CD4-positive, alpha-beta memory T cell (primary cell): ENCODE measurements at regions of chr17 and their contacts with region 1.

Region 1: GRCh38 chr17:1043601-1044251 is 46.8 kb downstream of the TIMM22 start:
- DNase-seq: no peak
- H3K4me3 ChIP-seq: no peak overlapping the region
- H3K4me3 Mint-ChIP-seq: no peak overlapping the region
- H3K27ac ChIP-seq: no peak overlapping the region
- H3K27ac Mint-ChIP-seq: no peak overlapping the region
- H3K4me1 ChIP-seq: no peaks in the 10 kb centered on the region
- H3K4me1 Mint-ChIP-seq: peaks cover 0 to 15% (median 5%) of the 10 kb centered on the region in 4 donors
- H3K27me3 ChIP-seq: no peaks in the 10 kb centered on the region
- H3K27me3 Mint-ChIP-seq: no peaks in the 10 kb centered on the region

Region 2: GRCh38 chr17:1055751-1056645 is 12.3 kb after region 1 on chr17:
- CTCF ChIA-PET with region 1: interaction called, 10 read pairs
- POLR2A ChIA-PET with region 1: no interaction called
- intact Hi-C with region 1: no loop called
- DNase-seq: peak in 3 of 5 donors; percentile 10 to 29 (median 16)
- H3K4me3 ChIP-seq: no peak overlapping the region
- H3K4me3 Mint-ChIP-seq: no peak overlapping the region
- H3K27ac ChIP-seq: no peak overlapping the region
- H3K27ac Mint-ChIP-seq: peak overlapping the region in 1 of 7 donors; percentile 36
- H3K4me1 ChIP-seq: no peaks in the 10 kb centered on the region
- H3K4me1 Mint-ChIP-seq: peaks cover 0 to 6% (median 0%) of the 10 kb centered on the region in 4 donors
- H3K27me3 ChIP-seq: no peaks in the 10 kb centered on the region
- H3K27me3 Mint-ChIP-seq: no peaks in the 10 kb centered on the region